Activated T-helper 2 cell treated with anti-CD3 and anti-CD28 coated beads, Interferon-gamma antibody, Interleukin-2, Interleukin-4, amounts not matched to agents 10 μg/mL and 5 μg/mL and 100 μg/mL, durations not matched to agents 14 hours and 24 hours and 36 hours (primary cell): ENCODE measurements at regions of chr13 and their contacts with region 1.

Region 1: DNA sequence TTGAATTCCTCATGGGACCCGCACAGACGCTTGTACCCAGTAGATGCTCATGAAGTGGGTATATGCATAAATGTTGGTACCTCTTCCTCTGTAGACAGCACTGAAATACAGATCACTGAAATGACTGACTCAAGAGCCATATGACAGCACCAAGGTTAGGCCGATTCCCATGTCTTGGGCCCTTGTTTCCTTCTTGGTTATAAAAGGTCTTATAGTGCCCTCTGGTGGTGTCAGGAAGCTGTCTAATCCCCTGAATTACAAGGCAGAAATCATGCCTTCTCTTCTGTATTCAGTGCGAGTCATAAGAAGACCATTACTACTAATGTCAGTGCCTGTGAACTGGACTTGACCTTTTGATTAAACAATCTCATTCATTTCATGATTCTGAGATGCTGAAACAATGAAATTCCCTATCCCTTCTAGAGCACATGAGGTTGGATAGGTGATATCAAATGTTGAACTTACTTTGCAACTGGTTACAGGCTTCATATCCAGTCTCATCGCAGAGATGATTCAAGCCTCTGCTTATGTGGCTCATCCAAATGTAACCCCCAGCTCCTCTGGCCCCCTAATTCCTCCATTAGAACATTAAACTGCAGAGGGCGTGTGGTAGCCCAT is 59.7 kb downstream of the SPATA13 start:
- DNase-seq: peak; percentile 32
- H3K4me3 Mint-ChIP-seq: no peak overlapping the region
- H3K27ac Mint-ChIP-seq: no peak overlapping the region
- H3K4me1 Mint-ChIP-seq: peaks cover 34% of the 10 kb centered on the region
- H3K27me3 Mint-ChIP-seq: no peaks in the 10 kb centered on the region

Region 2: DNA sequence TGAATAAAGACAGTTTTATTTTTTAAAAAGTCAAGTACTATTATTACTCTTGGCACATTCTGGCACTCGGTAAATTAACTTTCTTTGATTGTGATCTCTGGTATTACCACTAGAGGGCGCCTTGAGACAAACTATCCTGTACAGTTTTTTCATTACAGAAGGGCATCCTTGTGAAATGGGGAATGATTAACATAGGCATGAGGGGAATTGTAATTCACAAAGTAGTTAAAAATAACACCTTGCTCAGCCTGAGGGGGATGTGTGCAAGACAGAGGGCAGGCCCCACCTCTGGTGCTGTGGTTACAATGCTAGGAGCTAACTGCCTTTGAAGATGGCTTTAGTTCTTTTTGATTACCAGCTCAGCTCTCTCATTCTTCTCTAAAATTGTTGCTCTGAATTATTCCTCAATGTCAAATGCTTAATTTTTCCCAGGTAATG is 298.7 kb before region 1 on chr13:
- intact Hi-C with region 1: loop called (anchors 1 kb)
- DNase-seq: no peak
- H3K4me3 Mint-ChIP-seq: no peak overlapping the region
- H3K27ac Mint-ChIP-seq: no peak overlapping the region
- H3K4me1 Mint-ChIP-seq: no peaks in the 10 kb centered on the region
- H3K27me3 Mint-ChIP-seq: peaks cover 54% of the 10 kb centered on the region

Region 3: DNA sequence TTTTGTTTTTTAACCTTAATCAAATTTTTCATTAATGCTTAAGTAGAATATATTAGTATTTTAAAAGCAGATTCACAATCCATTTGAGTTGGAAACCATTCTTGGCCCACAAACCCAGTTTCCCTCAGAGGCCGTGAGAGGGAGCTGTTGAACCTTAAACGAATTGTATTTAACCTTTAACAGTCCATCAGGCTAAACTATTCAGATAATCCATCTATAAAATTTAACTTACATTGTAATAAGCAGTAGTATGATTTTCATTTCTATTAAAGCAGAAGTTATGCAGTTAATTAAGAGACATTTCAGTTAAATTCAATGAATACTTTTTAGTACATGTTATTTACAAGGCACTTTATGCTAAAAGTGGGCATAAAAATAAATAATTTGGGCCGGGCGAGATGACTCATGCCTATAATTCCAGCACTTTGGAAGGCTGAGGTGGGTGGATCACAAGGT is 199.8 kb before region 1 on chr13:
- intact Hi-C with region 1: loop called (anchors 1 kb)
- DNase-seq: no peak
- H3K4me3 Mint-ChIP-seq: no peak overlapping the region
- H3K27ac Mint-ChIP-seq: no peak overlapping the region
- H3K4me1 Mint-ChIP-seq: peaks cover 4% of the 10 kb centered on the region
- H3K27me3 Mint-ChIP-seq: no peaks in the 10 kb centered on the region

Region 4: DNA sequence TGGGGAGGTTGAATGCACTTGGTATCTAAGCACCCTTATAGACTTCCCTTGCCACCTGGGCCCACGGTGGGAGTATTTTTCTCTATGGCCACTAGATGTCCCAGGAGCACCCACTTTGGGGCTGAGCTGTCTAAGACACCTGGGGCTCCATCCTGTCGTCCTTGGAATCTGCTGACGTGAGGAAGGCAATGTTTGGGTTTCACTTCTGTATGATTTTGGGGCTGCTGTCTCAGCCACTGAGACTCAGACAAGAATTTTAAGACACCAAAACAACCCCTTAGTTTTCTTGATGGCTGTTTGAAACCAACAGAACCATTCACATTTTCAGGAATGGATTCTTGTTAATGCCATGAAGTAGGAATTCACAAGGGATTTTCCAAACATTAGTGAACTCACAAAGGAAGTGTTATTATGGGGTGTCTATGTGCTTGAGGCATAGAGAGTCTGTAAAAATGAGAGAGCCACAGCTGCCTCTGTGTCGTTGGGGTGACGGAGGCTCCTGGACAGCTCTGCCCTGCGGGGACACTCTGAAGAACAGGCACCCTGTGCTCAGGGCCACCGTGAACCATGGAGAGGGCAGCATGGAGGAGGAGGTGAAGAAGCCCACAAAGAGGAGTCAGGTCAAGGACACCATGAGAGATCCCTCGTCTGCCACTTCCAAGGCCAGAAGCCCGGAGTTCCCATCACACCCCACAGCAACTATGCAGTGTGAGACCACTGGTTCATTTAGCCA is 166.5 kb before region 1 on chr13:
- intact Hi-C with region 1: loop called (anchors 1 kb)
- DNase-seq: peak; percentile 49
- H3K4me3 Mint-ChIP-seq: no peak overlapping the region
- H3K27ac Mint-ChIP-seq: no peak overlapping the region
- H3K4me1 Mint-ChIP-seq: peaks cover 17% of the 10 kb centered on the region
- H3K27me3 Mint-ChIP-seq: peaks cover 15% of the 10 kb centered on the region

Region 5: GRCh38 chr13:24160454-24161009 is 59.7 kb before region 1 on chr13 and contains the start of gene SPATA13:
- intact Hi-C with region 1: loop called (anchors 2 kb)
- DNase-seq: peak; percentile 88
- H3K4me3 Mint-ChIP-seq: peak within 1 kb of the TSS; percentile 90
- H3K27ac Mint-ChIP-seq: peak within 1 kb of the TSS; percentile 50
- H3K4me1 Mint-ChIP-seq: peaks cover 22% of the 10 kb centered on the region
- H3K27me3 Mint-ChIP-seq: peaks cover 17% of the 10 kb centered on the region
- total RNA-seq, gene SPATA13: 41.5 and 44.9 TPM in 2 replicates

Region 6: GRCh38 chr13:24187185-24187584 is 33.0 kb before region 1 on chr13:
- intact Hi-C with region 1: loop called (anchors 5 kb)
- DNase-seq: no peak
- H3K4me3 Mint-ChIP-seq: no peak overlapping the region
- H3K27ac Mint-ChIP-seq: peak overlapping the region; percentile 80
- H3K4me1 Mint-ChIP-seq: peaks cover 41% of the 10 kb centered on the region
- H3K27me3 Mint-ChIP-seq: no peaks in the 10 kb centered on the region

Region 7: GRCh38 chr13:24270639-24271141 is 50.5 kb after region 1 on chr13:
- intact Hi-C with region 1: no loop called
- DNase-seq: peak; percentile 61
- H3K4me3 Mint-ChIP-seq: peak overlapping the region; percentile 97
- H3K27ac Mint-ChIP-seq: peak overlapping the region; percentile 95
- H3K4me1 Mint-ChIP-seq: peaks cover 81% of the 10 kb centered on the region
- H3K27me3 Mint-ChIP-seq: no peaks in the 10 kb centered on the region